Dendritic cell treated with granulocyte-macrophage colony-stimulating factor and Interleukin-4, amounts not matched to agents 40 ng/mL and 50 ng/mL, for 4 days (primary cell): ENCODE measurements at regions of chr2 and their contacts with region 1.

Region 1: DNA sequence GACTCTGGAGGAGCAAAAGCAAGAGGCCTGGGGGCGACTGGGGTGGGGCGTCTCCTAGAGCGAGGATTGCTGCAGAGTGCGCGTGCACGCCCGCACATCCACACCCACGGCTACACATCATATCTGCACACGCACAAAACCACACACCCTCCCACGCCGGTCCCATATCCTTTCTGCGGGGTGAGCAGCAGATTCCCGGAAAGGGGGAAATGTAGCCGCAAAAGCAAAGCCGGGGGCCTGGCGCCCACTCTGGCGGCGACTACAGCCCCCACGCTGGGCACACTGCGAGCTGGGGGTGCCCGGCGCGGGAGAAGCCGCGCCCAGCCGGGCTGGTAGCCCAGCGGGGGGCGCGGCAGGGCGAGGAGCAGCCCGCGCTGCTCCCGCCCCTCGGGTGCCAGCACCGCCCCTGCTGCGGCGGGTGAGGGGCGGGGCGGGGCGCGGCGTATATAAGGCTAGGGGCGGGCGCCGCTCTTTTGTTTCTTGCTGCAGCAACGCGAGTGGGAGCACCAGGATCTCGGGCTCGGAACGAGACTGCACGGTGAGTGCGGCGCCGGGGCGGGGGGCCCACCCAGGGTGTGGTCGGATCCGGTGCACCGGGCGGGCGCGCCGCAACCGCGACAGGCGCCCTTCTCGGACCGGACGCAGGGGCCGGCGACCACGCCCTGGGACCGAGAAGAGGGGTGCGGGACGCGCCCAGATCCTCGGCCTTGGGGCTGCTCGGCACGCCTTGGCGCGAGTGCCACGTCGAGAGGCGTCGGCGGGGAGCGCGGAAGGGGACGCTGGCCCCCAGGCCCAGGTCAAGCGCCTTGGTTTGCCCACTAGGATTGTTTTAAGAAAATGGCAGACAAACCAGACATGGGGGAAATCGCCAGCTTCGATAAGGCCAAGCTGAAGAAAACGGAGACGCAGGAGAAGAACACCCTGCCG is at the start of gene TMSB10:
- H3K4me3 Mint-ChIP-seq: peak within 1 kb of the TSS; percentile 98
- H3K27ac Mint-ChIP-seq: peak within 1 kb of the TSS; percentile 98
- H3K4me1 Mint-ChIP-seq: peaks cover 66% of the 10 kb centered on the region
- H3K27me3 Mint-ChIP-seq: no peaks in the 10 kb centered on the region

Region 2: GRCh38 chr2:84832772-84833461 is 72.5 kb before region 1 on chr2:
- intact Hi-C with region 1: loop called (anchors 5 kb)
- H3K4me3 Mint-ChIP-seq: peak overlapping the region; percentile 17
- H3K27ac Mint-ChIP-seq: no peak overlapping the region
- H3K4me1 Mint-ChIP-seq: peaks cover 12% of the 10 kb centered on the region
- H3K27me3 Mint-ChIP-seq: no peaks in the 10 kb centered on the region

Region 3: DNA sequence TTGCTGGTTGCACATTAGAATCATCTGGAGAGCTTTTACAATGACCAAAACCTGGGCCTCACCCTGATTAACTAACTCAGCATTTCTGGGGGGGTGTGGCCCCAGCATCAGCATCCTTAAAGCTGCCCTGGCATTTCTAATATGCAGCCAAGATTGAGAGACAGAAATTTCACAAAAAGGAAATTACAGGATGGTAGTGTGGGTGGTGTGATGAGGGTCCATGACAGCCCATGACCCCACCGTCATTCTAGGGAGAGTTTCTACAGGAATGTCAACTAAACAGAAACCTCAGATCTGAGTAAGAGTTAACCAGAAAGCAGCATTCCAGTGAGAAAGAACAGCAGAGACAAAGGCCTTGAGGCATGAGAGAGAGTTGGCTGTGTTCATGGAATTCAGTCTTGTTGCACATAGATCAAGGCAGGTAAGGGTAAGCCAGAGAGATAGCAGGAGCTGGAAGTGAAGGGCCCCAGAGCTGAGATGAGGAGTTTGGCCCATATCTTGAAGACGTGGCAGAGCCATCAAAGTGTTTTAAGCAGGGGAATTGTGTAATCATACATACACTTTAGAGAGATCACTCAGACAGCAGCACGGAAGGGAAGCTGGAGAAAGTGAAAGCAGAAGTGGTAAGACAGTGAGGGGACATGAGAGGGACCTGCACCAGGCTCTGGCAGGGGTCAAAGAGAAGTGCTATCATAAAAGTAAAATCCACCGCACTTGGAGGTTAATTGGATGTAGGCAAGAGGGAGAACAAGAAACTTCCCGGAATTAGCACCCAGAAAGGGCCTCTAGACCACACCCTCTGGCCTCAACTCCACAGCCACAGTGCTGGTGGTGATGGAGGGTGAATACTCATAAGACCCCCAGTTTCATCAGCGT is 16.8 kb before region 1 on chr2:
- intact Hi-C with region 1: loop called (anchors 2 kb)
- H3K4me3 Mint-ChIP-seq: peak overlapping the region; percentile 66
- H3K27ac Mint-ChIP-seq: peak overlapping the region; percentile 85
- H3K4me1 Mint-ChIP-seq: peaks cover 46% of the 10 kb centered on the region
- H3K27me3 Mint-ChIP-seq: peaks cover 6% of the 10 kb centered on the region

Region 4: DNA sequence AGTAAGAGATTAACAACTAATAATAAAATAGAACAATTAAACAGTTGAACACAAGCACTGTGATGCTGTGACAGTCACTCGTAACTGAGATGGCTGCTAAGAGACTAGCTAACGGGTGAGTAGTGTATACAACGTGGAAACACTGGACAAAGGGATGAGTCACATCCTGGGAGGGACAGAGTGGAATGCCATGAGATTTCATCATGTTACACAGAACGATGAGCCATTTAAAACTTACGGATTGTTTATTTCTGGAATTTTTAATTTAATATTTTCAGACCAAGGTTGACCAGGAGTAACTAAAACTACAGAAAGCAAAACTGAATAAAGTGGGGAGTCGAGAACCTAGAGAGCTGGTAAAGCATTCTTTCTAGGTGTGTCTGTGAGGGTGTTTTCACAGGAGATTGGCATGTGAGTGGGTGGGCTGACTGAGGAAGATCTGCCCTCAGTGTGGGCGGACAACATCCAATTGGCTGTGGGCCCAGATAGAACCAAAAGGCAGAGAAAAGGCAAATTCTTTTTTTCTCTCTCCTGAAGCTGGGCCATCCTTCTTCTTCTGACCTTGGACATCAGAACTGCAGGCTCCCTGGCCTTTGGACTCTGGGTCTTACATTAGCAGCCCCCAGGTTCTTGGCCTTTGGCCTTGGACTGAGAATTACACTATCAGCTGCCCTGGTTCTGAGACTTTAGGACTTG is 14.6 kb after region 1 on chr2:
- intact Hi-C with region 1: loop called (anchors 1 kb)
- H3K4me3 Mint-ChIP-seq: peak overlapping the region; percentile 23
- H3K27ac Mint-ChIP-seq: peak overlapping the region; percentile 81
- H3K4me1 Mint-ChIP-seq: peaks cover 37% of the 10 kb centered on the region
- H3K27me3 Mint-ChIP-seq: no peaks in the 10 kb centered on the region

Region 5: DNA sequence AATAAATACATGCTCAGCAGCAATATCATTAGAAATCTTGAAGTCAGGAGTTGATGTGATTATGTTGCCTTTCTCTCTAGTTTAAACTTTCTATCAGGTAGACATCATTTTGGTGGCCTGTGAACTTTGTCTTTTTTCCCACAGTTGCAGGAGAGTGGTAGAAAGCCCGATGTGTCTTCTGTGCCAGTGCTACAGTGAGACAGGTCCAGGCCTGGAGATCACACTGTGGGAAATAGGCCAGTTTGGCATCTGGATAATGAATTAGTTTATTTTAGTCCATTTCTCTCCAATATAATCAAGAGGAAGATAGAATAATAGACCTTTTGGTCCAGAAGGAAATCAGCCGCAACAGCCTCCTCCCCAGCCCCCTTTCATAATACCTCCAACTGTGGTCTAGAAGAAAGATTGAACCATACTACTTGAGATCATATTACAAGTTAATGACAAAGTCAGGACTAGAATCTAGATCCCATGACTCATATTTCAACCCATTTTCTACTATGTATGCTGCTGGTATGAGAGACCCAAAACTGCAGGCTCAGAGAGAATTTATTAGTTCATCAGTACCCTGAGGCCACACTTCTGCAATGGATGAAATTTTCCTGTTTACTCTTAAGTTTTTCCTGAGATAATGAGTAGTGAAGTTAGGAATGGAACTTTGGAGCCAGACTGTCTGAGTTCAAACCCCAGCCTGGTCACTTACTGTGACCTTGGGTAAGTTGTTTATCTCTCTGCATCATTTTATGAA is 86.1 kb after region 1 on chr2:
- intact Hi-C with region 1: no loop called
- H3K4me3 Mint-ChIP-seq: no peak overlapping the region
- H3K27ac Mint-ChIP-seq: no peak overlapping the region
- H3K4me1 Mint-ChIP-seq: peaks cover 21% of the 10 kb centered on the region
- H3K27me3 Mint-ChIP-seq: no peaks in the 10 kb centered on the region